CD8-positive, alpha-beta memory T cell (primary cell): ENCODE measurements at regions of chr14 and their contacts with region 1.

Region 1: DNA sequence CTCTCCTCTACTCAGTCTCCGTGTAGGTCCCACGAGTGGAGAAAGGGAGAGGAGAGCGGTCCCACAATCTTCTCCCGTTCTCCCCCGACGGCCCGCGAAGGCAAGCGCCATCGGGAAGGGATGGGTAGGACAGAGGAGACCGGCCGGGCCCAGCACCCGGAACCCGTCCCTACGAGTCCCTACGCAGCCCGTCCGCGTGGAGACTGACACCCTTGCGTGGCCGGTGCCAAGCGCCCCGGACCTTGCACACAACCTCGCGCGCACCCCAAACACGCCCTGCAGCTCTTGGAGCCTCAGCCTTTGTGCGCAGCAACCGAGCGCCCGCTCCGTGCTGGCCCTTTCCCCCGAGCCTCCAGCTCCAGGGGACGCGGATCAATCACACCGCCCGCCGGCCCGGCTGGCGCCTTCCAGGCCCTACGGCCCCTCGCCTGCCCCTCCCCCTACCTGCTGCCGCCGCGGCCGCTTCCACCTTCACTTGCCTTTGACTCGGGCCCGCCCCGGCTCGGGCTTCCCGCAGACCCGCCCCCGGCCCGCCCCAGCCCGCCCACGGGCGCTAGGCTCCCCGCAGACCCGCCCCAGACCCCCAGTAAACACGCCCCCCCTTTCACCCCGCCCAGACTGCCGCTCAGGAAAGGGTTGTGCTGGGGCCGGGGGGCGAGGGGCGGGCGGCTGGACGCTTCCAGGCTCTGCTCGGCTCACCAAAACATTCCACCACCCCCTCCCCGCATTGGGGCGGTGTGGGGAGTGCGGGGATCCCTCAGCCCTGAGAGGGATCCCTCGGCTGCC is at the start of gene NDRG2:
- DNase-seq: peak; percentile 66 to 86 (median 74)
- H3K4me3 ChIP-seq: peak within 1 kb of the TSS; percentile 71
- H3K4me3 Mint-ChIP-seq: peak within 1 kb of the TSS; percentile 82 to 95 (median 92)
- H3K27ac ChIP-seq: peak within 1 kb of the TSS; percentile 67
- H3K27ac Mint-ChIP-seq: peak within 1 kb of the TSS in 7 of 8 donors; percentile 51 to 96 (median 85)
- H3K4me1 ChIP-seq: peaks cover 13% of the 10 kb centered on the region
- H3K4me1 Mint-ChIP-seq: peaks cover 20 to 24% (median 23%) of the 10 kb centered on the region in 3 donors
- H3K27me3 ChIP-seq: no peaks in the 10 kb centered on the region
- H3K27me3 Mint-ChIP-seq: peaks cover 0 to 14% of the 10 kb centered on the region in 2 donors
- total RNA-seq, gene NDRG2: 4.8 to 5.0 TPM

Region 2: GRCh38 chr14:20982646-20983369 is 42.0 kb before region 1 on chr14:
- CTCF ChIA-PET with region 1: no interaction called
- POLR2A ChIA-PET with region 1: no interaction called
- DNase-seq: no peak
- H3K4me3 ChIP-seq: no peak overlapping the region
- H3K4me3 Mint-ChIP-seq: no peak overlapping the region
- H3K27ac ChIP-seq: no peak overlapping the region
- H3K27ac Mint-ChIP-seq: no peak overlapping the region
- H3K4me1 ChIP-seq: no peaks in the 10 kb centered on the region
- H3K4me1 Mint-ChIP-seq: no peaks in the 10 kb centered on the region
- H3K27me3 ChIP-seq: peaks cover 3% of the 10 kb centered on the region
- H3K27me3 Mint-ChIP-seq: peaks cover 3 to 29% of the 10 kb centered on the region in 2 donors

Region 3: GRCh38 chr14:20998664-20999366 is 26.0 kb before region 1 on chr14 and contains the start of gene SLC39A2:
- CTCF ChIA-PET with region 1: no interaction called
- POLR2A ChIA-PET with region 1: no interaction called
- DNase-seq: no peak
- H3K4me3 ChIP-seq: no peak within 1 kb of the TSS
- H3K4me3 Mint-ChIP-seq: no peak within 1 kb of the TSS
- H3K27ac ChIP-seq: no peak within 1 kb of the TSS
- H3K27ac Mint-ChIP-seq: peak within 1 kb of the TSS in 4 of 8 donors; percentile 24 to 85 (median 30)
- H3K4me1 ChIP-seq: peaks cover 7% of the 10 kb centered on the region
- H3K4me1 Mint-ChIP-seq: peaks cover 0 to 1% (median 0%) of the 10 kb centered on the region in 3 donors
- H3K27me3 ChIP-seq: no peaks in the 10 kb centered on the region
- H3K27me3 Mint-ChIP-seq: peaks cover 0 to 2% of the 10 kb centered on the region in 2 donors
- total RNA-seq, gene SLC39A2: 0.16 TPM in 1 of 2 experiments, not detected in the other

Region 4: GRCh38 chr14:21039585-21040369 is 15.0 kb after region 1 on chr14:
- CTCF ChIA-PET with region 1: interaction called, 133 read pairs
- POLR2A ChIA-PET with region 1: no interaction called
- DNase-seq: peak in 3 of 5 donors; percentile 24 to 53 (median 53)
- H3K4me3 ChIP-seq: no peak overlapping the region
- H3K4me3 Mint-ChIP-seq: no peak overlapping the region
- H3K27ac ChIP-seq: no peak overlapping the region
- H3K27ac Mint-ChIP-seq: no peak overlapping the region
- H3K4me1 ChIP-seq: peaks cover 6% of the 10 kb centered on the region
- H3K4me1 Mint-ChIP-seq: peaks cover 6 to 8% (median 8%) of the 10 kb centered on the region in 3 donors
- H3K27me3 ChIP-seq: no peaks in the 10 kb centered on the region
- H3K27me3 Mint-ChIP-seq: peaks cover 12 to 30% of the 10 kb centered on the region in 2 donors